OCI-LY7 (cell line): ENCODE measurements at regions of chr7 and their contacts with region 1.

Region 1: GRCh38 chr7:876167-876967 is at the start of gene GET4:
- DNase-seq: peak; percentile 99
- H3K4me3 ChIP-seq: peak within 1 kb of the TSS; percentile 92
- H3K27ac ChIP-seq: peak within 1 kb of the TSS; percentile 77
- H3K4me1 ChIP-seq: peaks cover 38% of the 10 kb centered on the region
- CTCF ChIP-seq: no peak; the same call in 1 of the 2 replicates
- total RNA-seq, gene GET4: 46.3 and 54.4 TPM in 2 replicates

Region 2: DNA sequence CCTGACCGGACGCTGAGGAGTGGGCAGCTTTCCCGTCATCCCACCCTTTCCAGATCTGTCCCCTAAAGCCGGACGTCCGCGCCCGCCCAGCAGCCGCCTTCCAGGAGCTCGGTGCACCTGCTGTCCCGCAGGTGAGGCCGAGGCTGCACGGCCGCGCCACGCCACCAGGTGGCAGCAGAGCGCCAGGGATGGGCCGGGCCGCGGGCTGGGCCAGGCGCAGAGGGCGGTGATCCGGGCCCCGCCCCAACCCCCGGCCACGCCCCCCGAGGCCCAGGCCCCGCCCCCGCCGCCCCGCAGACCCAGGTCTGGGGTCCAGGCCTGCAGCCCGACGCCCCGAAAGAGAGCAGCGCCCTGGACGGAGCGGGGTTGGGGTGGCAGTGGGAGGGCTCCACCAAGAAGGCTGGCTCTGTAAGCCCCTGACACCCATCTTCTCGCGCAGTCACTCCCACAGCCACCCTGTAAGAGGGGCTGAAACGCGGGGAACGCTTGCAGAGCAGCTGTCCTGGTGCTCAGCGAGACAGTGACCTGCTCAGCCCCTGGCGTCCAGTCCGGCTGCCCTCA is 554.2 kb before region 1 on chr7:
- CTCF ChIA-PET with region 1: no interaction called
- POLR2A ChIA-PET with region 1: no interaction called
- intact Hi-C with region 1: loop called (anchors 1 kb)
- DNase-seq: peak; percentile 63
- H3K4me3 ChIP-seq: no peak overlapping the region
- H3K27ac ChIP-seq: no peak overlapping the region
- H3K4me1 ChIP-seq: no peaks in the 10 kb centered on the region
- CTCF ChIP-seq: peak; percentile 75

Region 3: DNA sequence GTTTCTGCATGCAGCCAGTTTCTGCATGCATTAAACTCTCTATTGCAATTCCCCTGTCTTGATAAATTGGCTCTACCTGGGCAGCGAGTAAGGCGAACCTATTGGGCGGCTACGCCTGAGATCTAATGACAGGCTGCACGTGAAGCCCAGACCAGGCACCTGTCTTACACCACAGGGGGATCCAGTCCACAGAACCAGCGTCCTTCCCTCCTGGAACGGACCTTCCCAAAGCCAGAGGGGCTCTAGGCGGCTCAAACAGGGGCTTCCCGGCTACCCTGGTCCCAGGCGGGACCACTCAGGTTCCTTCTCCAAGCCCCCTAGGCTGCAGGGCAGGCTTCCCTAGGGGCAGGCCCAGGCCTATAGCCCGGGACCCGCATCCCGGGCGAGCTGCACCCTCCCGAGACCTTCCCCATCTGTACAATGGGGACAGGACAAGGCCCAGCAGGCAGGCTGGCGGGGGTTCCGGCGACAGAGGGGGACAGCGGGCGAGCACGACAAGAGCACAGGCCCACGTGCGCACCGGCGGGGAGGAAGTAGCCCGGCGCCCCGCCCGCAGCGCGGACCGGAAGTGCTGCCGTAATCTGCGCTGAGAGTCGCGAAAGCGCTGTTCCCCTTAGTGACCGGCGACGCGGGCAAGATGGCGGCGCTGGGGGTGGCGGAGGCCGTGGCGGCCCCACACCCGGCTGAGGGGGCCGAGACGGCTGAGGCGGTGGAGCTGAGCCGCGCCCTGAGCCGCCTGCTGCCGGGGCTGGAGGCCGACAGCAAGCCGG is 150.1 kb before region 1 on chr7 and contains the start of gene DNAAF5:
- CTCF ChIA-PET with region 1: no interaction called
- POLR2A ChIA-PET with region 1: no interaction called
- intact Hi-C with region 1: loop called (anchors 1 kb)
- DNase-seq: peak; percentile 94
- H3K4me3 ChIP-seq: peak within 1 kb of the TSS; percentile 79
- H3K27ac ChIP-seq: peak within 1 kb of the TSS; percentile 31
- H3K4me1 ChIP-seq: peaks cover 20% of the 10 kb centered on the region
- CTCF ChIP-seq: no peak
- total RNA-seq, gene DNAAF5: 36.2 and 42.6 TPM in 2 replicates

Region 4: GRCh38 chr7:786472-787255 is 89.7 kb before region 1 on chr7:
- CTCF ChIA-PET with region 1: no interaction called
- POLR2A ChIA-PET with region 1: no interaction called
- intact Hi-C with region 1: loop called (anchors 1 kb)
- DNase-seq: peak; percentile 61
- H3K4me3 ChIP-seq: no peak overlapping the region
- H3K27ac ChIP-seq: no peak overlapping the region
- H3K4me1 ChIP-seq: no peaks in the 10 kb centered on the region
- CTCF ChIP-seq: peak; percentile 90

Region 5: GRCh38 chr7:816300-816750 is 60.0 kb before region 1 on chr7:
- CTCF ChIA-PET with region 1: interaction called, 3 read pairs
- POLR2A ChIA-PET with region 1: interaction called, 3 read pairs
- intact Hi-C with region 1: loop called (anchors 1 kb)
- DNase-seq: peak; percentile 99
- H3K4me3 ChIP-seq: peak overlapping the region; percentile 84
- H3K27ac ChIP-seq: no peak overlapping the region
- H3K4me1 ChIP-seq: peaks cover 35% of the 10 kb centered on the region
- CTCF ChIP-seq: no peak

Region 6: DNA sequence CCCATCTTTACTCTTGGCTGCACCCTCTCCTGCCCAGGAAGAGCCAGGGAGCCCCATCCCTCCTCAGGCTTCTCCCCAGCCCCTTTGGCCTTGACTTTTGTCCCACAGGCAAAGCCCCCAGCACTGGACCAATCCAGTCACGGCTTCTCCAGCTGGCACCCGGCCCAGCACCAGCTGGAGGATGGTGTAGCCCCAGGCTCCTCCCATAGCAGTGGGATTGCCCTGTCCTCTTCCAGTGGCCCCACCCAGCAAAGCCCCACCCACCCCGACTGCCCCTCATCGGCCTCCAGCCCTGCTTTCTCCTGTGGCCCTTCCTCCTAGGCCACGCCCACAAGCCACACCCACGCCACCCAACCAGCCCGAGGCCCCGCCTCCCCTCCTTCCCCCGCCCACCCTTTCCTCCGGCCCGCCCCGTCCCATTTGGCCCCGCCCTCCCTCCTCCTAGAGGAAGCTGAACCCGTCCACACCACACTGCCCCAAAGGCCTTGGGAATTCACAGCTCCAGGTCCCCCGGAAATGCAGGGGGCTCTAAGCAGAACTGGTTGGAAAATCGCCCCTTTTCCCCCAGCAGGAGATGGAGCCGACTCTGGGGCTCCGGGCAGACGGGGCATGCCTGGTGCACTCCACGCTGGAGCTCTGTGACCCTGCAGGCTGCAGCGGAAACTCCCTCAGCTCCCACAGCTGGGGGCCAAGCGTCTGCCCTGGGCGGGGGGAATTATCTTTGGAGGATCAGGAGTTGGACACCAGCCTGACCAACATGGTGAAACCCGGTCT is 25.2 kb after region 1 on chr7:
- CTCF ChIA-PET with region 1: no interaction called
- POLR2A ChIA-PET with region 1: no interaction called
- intact Hi-C with region 1: loop called (anchors 1 kb)
- DNase-seq: peak; percentile 79
- H3K4me3 ChIP-seq: no peak overlapping the region
- H3K27ac ChIP-seq: no peak overlapping the region
- H3K4me1 ChIP-seq: no peaks in the 10 kb centered on the region
- CTCF ChIP-seq: no peak